ENCODE measurements at regions of chr12 and their contacts with region 1.

Region 1: GRCh38 chr12:100200463-100201181 is at the start of gene ACTR6:
- DNase-seq: peak; percentile 86 to 99 (median 94)

Region 2: GRCh38 chr12:100142851-100143559 is 57.6 kb before region 1 on chr12 and contains the start of gene BLTP3B:
- intact Hi-C with region 1: loop called (anchors 1 kb)
- DNase-seq: peak; percentile 84 to 98 (median 92)

Region 3: GRCh38 chr12:100382338-100382737 is 181.7 kb after region 1 on chr12:
- intact Hi-C with region 1: no loop called
- DNase-seq: no peak